Natural killer cell (primary cell): ENCODE measurements at regions of chr14 and their contacts with region 1.

Region 1: DNA sequence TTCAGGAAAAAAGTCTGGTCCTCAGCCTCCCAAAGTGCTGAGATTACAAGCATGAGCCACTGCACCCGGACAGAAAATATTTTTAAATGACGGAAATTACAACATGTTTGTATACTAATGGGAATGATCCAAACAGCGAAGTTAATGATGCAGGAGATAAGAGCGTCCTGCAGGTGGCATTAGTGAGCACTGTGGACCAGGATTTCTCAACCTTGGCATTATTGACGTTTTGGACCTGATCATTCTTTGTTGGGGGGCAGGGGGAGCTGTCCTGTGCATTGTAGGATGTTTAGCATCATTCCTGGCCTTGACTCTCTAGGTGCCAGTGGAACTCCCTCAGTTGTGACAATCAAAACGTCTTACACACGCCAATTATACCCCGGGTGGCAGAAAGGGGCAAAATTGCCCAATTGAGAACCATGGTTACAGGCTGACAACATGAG is 34.1 kb downstream of the SCFD1 start:
- DNase-seq: peak in 1 of 2 donors; percentile 70
- ATAC-seq: peak; percentile 65 to 76 (median 72)
- H3K4me3 ChIP-seq: no peak overlapping the region
- H3K4me3 Mint-ChIP-seq: no peak overlapping the region
- H3K27ac ChIP-seq: no peak overlapping the region
- H3K27ac Mint-ChIP-seq: no peak overlapping the region
- H3K4me1 ChIP-seq: no peaks in the 10 kb centered on the region
- H3K4me1 Mint-ChIP-seq: peaks cover 0 to 5% of the 10 kb centered on the region in 2 donors
- H3K27me3 ChIP-seq: no peaks in the 10 kb centered on the region
- H3K27me3 Mint-ChIP-seq: no peaks in the 10 kb centered on the region
- CTCF ChIP-seq: peak; percentile 73

Region 2: DNA sequence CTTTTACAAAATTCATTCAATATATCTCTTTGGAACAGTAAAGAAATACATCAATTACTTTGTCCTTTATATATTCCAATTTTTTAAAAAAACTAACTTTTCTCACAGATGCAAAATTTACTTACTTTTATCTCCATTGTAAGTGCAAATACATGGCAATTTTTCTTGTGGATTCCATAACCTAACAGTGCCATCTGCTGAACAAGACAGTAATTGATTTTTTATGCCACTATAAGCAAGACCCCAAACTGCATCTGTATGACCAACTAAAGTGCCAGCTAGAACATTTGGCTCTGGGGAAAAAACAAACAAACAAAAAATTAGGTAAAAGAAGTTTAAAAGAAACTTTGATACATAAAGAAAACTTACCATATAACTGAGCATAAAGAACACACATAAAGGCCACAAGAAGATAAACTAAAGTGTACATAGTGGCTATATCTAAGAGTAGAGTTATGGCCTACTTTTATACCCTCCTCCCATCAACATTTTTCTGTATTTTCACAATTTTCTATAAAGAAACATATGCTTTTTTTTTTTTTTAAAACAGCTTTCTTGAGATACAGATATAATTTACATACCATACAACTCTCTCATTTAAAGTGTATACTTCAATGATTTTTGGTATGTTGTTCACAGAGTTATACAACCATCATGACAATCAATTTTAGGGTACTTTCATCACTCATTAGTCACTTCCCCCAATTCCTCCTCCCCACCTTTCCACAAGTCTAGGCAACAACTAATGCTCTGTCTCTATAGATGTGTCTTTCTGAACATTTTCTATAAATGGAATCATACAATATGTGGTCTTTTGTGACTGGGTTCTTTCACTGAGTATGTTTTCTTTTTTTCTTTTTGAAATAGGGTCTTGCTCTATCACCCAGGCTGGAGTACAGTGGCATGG is 250.8 kb after region 1 on chr14:
- intact Hi-C with region 1: loop called (anchors 2 kb)
- DNase-seq: peak in 1 of 2 donors; percentile 27
- ATAC-seq: no peak
- H3K4me3 ChIP-seq: no peak overlapping the region
- H3K4me3 Mint-ChIP-seq: no peak overlapping the region
- H3K27ac ChIP-seq: no peak overlapping the region
- H3K27ac Mint-ChIP-seq: no peak overlapping the region
- H3K4me1 ChIP-seq: no peaks in the 10 kb centered on the region
- H3K4me1 Mint-ChIP-seq: no peaks in the 10 kb centered on the region
- H3K27me3 ChIP-seq: no peaks in the 10 kb centered on the region
- H3K27me3 Mint-ChIP-seq: no peaks in the 10 kb centered on the region
- CTCF ChIP-seq: no peak